Heart right ventricle (tissue), 16 donors: ENCODE measurements at regions of chr14 and their contacts with region 1.

Region 1: DNA sequence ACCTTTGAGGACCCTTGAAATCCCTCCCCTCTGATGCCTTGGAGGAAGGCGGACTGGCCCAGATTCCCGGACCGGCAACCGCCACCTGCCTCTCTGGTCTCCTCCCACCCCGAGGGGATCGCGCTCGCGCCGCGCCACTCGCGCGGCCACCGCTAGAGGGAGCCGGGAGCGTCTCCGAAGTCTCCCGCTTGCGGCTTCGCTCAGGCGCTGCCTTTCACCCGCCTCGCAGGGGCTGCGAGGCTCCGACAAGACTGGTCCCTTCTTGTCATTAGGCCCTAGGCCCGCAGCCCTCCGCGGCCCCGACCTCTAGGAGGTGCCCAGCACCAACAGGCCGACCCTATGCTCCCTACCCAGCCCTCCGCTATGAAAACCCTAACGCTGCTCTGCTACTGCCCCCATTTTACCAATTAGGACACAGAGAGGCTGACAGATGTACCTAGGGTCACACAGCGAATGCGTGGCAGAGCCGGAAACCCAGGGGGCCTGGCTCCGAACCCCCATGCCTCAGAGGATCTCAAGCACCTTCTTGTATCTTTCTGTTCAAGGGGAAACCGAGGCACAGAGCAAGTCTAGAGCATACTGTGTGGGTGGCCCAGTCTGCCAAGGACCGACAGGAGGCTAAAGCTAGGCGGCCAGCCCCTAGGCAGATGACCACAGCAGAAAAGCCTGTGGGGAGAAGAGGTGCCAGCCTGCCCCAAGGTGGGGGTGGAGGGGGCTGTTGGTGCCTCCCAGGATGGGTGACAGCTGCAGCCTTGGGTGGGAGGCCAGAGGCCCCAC is 21.4 kb upstream of the VSX2 start:
- DNase-seq: peak; percentile 41 to 77
- ATAC-seq: peak; percentile 67 to 86 (median 84)
- H3K4me3 ChIP-seq: no peak overlapping the region
- H3K27ac ChIP-seq: no peak overlapping the region
- H3K4me1 ChIP-seq: peaks cover 0 to 12% (median 5%) of the 10 kb centered on the region in 9 donors
- H3K27me3 ChIP-seq: peaks cover 0 to 69% (median 43%) of the 10 kb centered on the region in 7 donors
- CTCF ChIP-seq: peak; percentile 73 to 95 (median 91)

Region 2: GRCh38 chr14:74249433-74250375 is 31.8 kb after region 1 on chr14:
- intact Hi-C with region 1: loop called in 4 of 10 experiments (anchors 1 to 5 kb)
- DNase-seq: no peak
- ATAC-seq: no peak
- H3K4me3 ChIP-seq: no peak overlapping the region
- H3K27ac ChIP-seq: no peak overlapping the region
- H3K4me1 ChIP-seq: peaks cover 0 to 12% (median 4%) of the 10 kb centered on the region in 9 donors
- H3K27me3 ChIP-seq: peaks cover 0 to 42% (median 33%) of the 10 kb centered on the region in 7 donors
- CTCF ChIP-seq: no peak

Region 3: DNA sequence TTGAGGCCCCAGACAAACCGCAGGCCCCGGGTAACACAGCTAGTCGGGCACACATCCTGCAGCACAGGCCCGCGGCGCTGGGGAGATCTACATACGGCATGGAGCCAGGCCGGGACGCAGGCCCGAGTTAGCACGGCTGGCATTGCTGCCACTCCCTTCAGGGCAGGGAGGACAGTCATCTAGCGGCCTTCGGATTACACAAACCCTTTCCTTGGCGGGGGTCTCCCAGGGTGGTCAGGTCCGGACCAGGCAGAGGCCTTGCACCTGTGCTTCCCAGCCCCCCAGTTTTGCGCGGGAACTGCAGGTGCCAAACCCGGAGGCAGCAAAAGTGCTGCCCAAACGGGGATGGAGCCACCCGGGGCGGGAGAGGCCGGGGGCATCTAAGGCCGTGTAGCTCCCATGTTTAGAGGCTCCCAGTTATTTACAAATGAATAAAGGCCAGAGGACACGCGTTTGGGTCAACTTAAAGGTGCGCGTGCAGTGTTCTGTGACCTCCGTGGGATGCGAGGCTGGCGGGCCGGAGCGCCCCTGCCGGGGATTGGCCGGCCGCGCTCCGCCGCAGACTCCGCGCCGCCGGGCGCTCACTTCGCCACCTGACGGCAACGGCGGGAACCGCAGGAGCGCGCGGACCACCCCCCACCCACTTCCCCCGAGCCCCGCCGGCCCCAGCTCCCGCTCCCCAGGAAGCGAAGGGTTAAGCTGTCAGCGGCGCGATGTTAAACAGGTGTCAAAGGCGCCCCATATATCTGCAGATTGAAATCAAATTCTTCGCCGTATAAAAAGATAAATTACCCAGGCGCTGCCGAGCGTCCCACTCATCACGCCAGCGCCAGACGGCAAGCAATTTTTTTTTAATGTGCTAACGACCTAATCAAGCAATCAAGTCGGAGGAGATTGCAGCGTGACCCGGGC is 39.5 kb after region 1 on chr14:
- intact Hi-C with region 1: loop called in 2 of 10 experiments (anchors 2 to 5 kb)
- DNase-seq: peak; percentile 17 to 51
- ATAC-seq: peak; percentile 80 to 88 (median 84)
- H3K4me3 ChIP-seq: peak overlapping the region; percentile 50 to 84 (median 72)
- H3K27ac ChIP-seq: peak overlapping the region in 4 of 10 donors; percentile 14 to 57 (median 44)
- H3K4me1 ChIP-seq: peaks cover 0 to 17% (median 13%) of the 10 kb centered on the region in 9 donors
- H3K27me3 ChIP-seq: peaks cover 0 to 20% (median 0%) of the 10 kb centered on the region in 7 donors
- CTCF ChIP-seq: peak in 8 of 9 donors; percentile 93 to 99 (median 97)

Region 4: GRCh38 chr14:74368846-74369245 is 151.0 kb after region 1 on chr14:
- intact Hi-C with region 1: no loop called
- DNase-seq: no peak
- ATAC-seq: no peak
- H3K4me3 ChIP-seq: no peak overlapping the region
- H3K27ac ChIP-seq: no peak overlapping the region
- H3K4me1 ChIP-seq: no peaks in the 10 kb centered on the region
- H3K27me3 ChIP-seq: peaks cover 0 to 18% (median 0%) of the 10 kb centered on the region in 7 donors
- CTCF ChIP-seq: no peak

Region 5: GRCh38 chr14:74502236-74503019 is 284.6 kb after region 1 on chr14:
- intact Hi-C with region 1: no loop called
- DNase-seq: no peak
- ATAC-seq: peak in 2 of 8 donors; percentile 36 to 38
- H3K4me3 ChIP-seq: no peak overlapping the region
- H3K27ac ChIP-seq: no peak overlapping the region
- H3K4me1 ChIP-seq: peaks cover 0 to 12% (median 0%) of the 10 kb centered on the region in 9 donors
- H3K27me3 ChIP-seq: no peaks in the 10 kb centered on the region
- CTCF ChIP-seq: peak in 7 of 9 donors; percentile 12 to 41 (median 34)